ENCODE measurements at regions of chr13 and their contacts with region 1.

Region 1: DNA sequence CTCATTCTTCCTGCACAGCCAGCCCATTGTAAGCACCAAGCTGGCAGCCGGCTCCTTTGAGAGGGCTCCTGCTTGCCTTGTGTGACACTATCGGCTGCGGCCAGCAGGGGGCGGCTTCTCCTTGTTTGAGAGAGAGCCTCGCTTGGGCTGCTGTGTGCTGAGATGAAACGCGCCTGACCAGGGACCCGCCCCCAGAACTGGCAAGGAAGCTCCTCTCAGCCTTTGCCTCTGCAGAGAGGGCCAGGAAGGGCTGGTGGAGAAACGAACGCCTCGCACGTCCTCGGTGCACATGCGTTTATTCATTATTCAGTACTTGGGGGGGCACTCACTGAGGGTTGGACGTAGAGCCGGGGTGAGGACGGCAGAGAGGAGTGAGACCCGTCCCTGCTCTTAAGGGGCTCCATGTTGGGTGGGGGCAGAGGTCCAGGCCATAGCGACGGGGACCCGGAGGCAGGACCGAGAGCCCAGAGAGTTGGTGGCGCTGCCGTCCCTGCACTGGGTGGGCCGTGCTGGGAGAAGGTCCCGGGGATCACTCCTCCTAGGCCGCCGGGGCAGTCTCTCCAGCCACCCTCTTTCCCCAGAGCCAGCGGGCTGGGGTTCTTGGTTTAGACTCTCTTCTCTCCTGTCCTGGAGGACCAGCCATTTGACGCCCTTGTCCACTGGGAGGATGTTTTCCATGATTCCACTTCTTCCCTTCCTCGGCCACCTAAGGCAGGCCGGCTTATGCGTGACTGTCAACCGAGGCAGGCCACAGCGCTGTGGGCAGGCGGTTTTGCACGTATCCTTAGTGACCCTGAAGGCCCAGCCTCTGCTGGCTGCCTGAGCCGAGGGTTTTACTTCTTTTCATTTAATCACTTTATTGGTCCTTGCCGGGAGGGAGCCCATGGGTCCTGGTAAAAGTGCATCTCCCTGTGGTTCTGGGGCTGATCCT is 174.5 kb downstream of the KATNAL1 start:
- DNase-seq: peak; percentile 89
- H3K4me3 ChIP-seq: no peak overlapping the region
- H3K27ac ChIP-seq: no peak overlapping the region
- H3K4me1 ChIP-seq: peaks cover 4% of the 10 kb centered on the region
- H3K27me3 ChIP-seq: no peaks in the 10 kb centered on the region
- CTCF ChIP-seq: peak; percentile 79 to 92
- POLR2A ChIP-seq: no peak

Region 2: GRCh38 chr13:29954082-29955028 is 178.5 kb before region 1 on chr13:
- CTCF ChIA-PET with region 1: no interaction called
- POLR2A ChIA-PET with region 1: no interaction called
- dilution Hi-C with region 1: no loop called
- intact Hi-C with region 1: no loop called
- DNase-seq: no peak
- H3K4me3 ChIP-seq: no peak overlapping the region
- H3K27ac ChIP-seq: no peak overlapping the region
- H3K4me1 ChIP-seq: no peaks in the 10 kb centered on the region
- H3K27me3 ChIP-seq: peaks cover 0 to 1% of the 10 kb centered on the region in 2 experiments
- CTCF ChIP-seq: no peak
- POLR2A ChIP-seq: no peak

Region 3: GRCh38 chr13:30257468-30258099 is 124.7 kb after region 1 on chr13:
- CTCF ChIA-PET with region 1: interaction called, 12 read pairs
- POLR2A ChIA-PET with region 1: no interaction called
- dilution Hi-C with region 1: no loop called
- intact Hi-C with region 1: no loop called
- DNase-seq: no peak
- H3K4me3 ChIP-seq: no peak overlapping the region
- H3K27ac ChIP-seq: no peak overlapping the region
- H3K4me1 ChIP-seq: no peaks in the 10 kb centered on the region
- H3K27me3 ChIP-seq: no peaks in the 10 kb centered on the region
- CTCF ChIP-seq: no peak
- POLR2A ChIP-seq: no peak

Region 4: DNA sequence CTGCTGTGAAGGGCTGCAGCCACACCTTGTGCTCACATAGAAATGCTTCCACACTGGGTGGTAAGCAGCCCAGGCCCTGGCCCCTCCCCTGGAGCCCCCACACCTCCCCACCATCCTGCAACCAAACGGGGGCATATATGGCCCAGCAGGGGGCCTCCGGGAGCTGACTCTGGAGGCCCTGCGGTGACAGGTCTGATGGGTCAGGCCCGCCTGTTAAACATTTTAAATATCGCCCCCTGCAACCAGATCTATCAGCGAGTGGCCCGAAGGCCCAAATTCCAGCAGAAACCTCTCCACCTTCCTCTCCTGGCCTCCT is 222.5 kb after region 1 on chr13:
- CTCF ChIA-PET with region 1: interaction called, 17 read pairs
- POLR2A ChIA-PET with region 1: no interaction called
- dilution Hi-C with region 1: no loop called
- intact Hi-C with region 1: no loop called
- DNase-seq: peak; percentile 37
- H3K4me3 ChIP-seq: no peak overlapping the region
- H3K27ac ChIP-seq: no peak overlapping the region
- H3K4me1 ChIP-seq: no peaks in the 10 kb centered on the region
- H3K27me3 ChIP-seq: no peaks in the 10 kb centered on the region
- CTCF ChIP-seq: peak; percentile 43 to 72
- POLR2A ChIP-seq: no peak

Region 5: GRCh38 chr13:30465585-30466357 is 332.9 kb after region 1 on chr13 and contains the start of gene HMGB1:
- CTCF ChIA-PET with region 1: interaction called, 19 read pairs
- POLR2A ChIA-PET with region 1: no interaction called
- dilution Hi-C with region 1: no loop called
- intact Hi-C with region 1: loop called (anchors 2 kb)
- DNase-seq: peak; percentile 98
- H3K4me3 ChIP-seq: peak within 1 kb of the TSS; percentile 48 to 69 (median 66)
- H3K27ac ChIP-seq: peak within 1 kb of the TSS; percentile 85
- H3K4me1 ChIP-seq: peaks cover 25% of the 10 kb centered on the region
- H3K27me3 ChIP-seq: no peaks in the 10 kb centered on the region
- CTCF ChIP-seq: no peak
- POLR2A ChIP-seq: peak; percentile 80
- total RNA-seq, gene HMGB1: 670 and 675 TPM in 2 replicates

Region 6: GRCh38 chr13:30617315-30618185 is 484.7 kb after region 1 on chr13 and contains the start of gene USPL1:
- CTCF ChIA-PET with region 1: interaction called, 30 read pairs
- POLR2A ChIA-PET with region 1: no interaction called
- dilution Hi-C with region 1: no loop called
- intact Hi-C with region 1: loop called (anchors 1 kb)
- DNase-seq: peak; percentile 100
- H3K4me3 ChIP-seq: peak within 1 kb of the TSS; percentile 83 to 95 (median 95)
- H3K27ac ChIP-seq: peak within 1 kb of the TSS; percentile 87
- H3K4me1 ChIP-seq: peaks cover 36% of the 10 kb centered on the region
- H3K27me3 ChIP-seq: no peaks in the 10 kb centered on the region
- CTCF ChIP-seq: peak in 1 of 2 donors; percentile 31
- POLR2A ChIP-seq: no peak
- total RNA-seq, gene USPL1: 18.8 and 21.0 TPM in 2 replicates

Region 7: DNA sequence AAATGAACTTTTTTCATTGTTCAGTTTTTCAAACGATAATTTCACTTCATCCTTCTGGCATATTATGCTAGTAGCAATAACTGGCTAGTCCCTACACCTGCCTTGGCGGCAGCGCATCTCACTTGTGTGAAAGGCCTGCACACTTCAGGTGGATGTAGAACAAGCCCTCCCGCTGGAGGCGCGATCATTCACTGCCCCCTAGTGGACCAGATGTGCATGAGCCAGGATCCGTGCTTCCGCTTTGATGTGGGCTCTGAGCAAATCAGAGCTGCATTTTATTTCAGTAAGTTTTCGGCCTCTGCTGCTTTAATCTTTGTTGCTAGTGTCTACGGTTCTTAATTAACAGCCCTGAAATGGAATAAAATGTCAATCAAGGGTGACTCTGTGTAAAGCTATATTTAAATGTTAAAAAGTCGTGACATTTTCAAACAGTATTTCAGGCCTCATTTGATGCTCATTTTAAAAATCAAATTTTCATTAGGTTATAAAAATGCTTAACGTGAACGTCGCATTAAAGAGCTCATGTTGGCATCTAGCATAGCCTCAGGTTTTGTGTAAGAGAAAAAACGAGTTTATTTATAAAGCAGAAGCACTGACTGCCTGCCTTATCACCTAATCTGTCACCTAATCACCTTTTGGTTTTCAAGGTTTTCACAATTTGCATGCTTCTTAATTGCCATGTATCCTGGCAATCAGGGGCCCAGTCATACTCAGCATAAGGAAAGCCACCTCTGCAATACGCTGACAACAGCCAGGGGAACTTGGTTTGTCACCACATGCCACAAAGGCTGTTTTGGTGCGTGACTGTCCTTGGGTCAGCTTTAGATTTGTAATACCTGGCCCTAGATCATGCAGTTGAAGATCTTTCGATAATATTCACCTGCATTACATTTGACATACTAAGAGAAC is 911.7 kb after region 1 on chr13:
- CTCF ChIA-PET with region 1: interaction called, 37 read pairs
- POLR2A ChIA-PET with region 1: no interaction called
- dilution Hi-C with region 1: no loop called
- intact Hi-C with region 1: loop called (anchors 1 kb)
- DNase-seq: peak; percentile 83
- H3K4me3 ChIP-seq: no peak overlapping the region
- H3K27ac ChIP-seq: peak overlapping the region; percentile 68
- H3K4me1 ChIP-seq: peaks cover 35% of the 10 kb centered on the region
- H3K27me3 ChIP-seq: no peaks in the 10 kb centered on the region
- CTCF ChIP-seq: peak; percentile 92 to 93
- POLR2A ChIP-seq: no peak

Measured in endothelial cell of umbilical vein (primary cell).